ENCODE measurements at regions of chr1 and their contacts with region 1.

Region 1: GRCh38 chr1:11099310-11100149 is at the start of gene EXOSC10:
- DNase-seq: peak; percentile 95
- ATAC-seq: peak; percentile 97
- H3K4me3 Mint-ChIP-seq: peak within 1 kb of the TSS; percentile 91
- H3K27ac Mint-ChIP-seq: peak within 1 kb of the TSS; percentile 95
- H3K4me1 Mint-ChIP-seq: peaks cover 11% of the 10 kb centered on the region
- H3K27me3 Mint-ChIP-seq: no peaks in the 10 kb centered on the region
- CTCF ChIP-seq: no peak
- total RNA-seq, gene EXOSC10: 66.6 to 69.8 TPM

Region 2: DNA sequence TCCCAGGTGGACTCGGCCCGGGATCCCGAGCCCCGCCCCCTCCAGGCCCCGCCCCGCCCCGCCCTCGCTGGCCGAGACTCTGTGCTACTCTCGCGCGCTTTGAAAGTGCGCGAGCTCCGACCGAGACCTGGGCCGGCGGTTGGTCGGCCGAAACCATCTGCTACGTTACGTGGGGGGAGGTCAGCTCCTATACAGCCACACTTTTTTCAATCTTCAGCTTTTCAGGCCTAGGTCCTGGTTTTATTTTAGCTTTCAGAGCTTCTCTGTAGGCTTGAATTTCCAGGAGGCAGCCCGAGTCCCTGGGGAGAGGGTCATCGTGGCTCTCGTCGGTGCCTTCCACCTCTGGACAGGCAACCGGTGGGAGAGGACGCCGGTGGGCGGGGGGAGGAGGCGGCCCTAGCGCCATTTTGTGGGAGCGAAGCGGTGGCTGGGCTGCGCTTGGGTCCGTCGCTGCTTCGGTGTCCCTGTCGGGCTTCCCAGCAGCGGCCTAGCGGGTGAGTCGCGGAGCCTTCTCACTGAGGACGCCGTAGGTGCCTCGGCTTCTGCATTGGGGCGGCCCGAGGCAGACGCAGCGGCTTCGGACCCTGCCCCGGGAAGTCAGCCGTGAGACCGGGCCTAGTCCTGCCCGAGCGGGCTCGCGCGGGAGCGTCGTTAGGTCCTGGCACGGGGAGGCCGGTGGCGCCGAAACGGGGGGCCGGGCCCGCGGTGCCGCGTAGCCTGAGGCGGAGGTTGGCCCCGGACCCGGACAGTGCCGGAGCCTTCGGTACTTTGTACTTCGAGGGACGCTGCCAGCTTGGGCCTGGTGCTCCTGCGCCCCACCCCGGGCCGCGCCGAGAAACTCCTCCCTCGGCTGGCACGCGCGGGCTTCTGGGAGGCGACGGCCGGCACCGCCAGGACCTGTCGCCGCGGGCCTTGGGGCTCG is 87.0 kb before region 1 on chr1 and contains the start of gene TARDBP:
- CTCF ChIA-PET with region 1: no interaction called
- POLR2A ChIA-PET with region 1: interaction called, 12 read pairs
- intact Hi-C with region 1: no loop called
- DNase-seq: peak; percentile 92
- ATAC-seq: peak; percentile 92
- H3K4me3 Mint-ChIP-seq: peak within 1 kb of the TSS; percentile 96
- H3K27ac Mint-ChIP-seq: peak within 1 kb of the TSS; percentile 99
- H3K4me1 Mint-ChIP-seq: peaks cover 27% of the 10 kb centered on the region
- H3K27me3 Mint-ChIP-seq: no peaks in the 10 kb centered on the region
- CTCF ChIP-seq: no peak
- total RNA-seq, gene TARDBP: 152 to 163 TPM

Region 3: DNA sequence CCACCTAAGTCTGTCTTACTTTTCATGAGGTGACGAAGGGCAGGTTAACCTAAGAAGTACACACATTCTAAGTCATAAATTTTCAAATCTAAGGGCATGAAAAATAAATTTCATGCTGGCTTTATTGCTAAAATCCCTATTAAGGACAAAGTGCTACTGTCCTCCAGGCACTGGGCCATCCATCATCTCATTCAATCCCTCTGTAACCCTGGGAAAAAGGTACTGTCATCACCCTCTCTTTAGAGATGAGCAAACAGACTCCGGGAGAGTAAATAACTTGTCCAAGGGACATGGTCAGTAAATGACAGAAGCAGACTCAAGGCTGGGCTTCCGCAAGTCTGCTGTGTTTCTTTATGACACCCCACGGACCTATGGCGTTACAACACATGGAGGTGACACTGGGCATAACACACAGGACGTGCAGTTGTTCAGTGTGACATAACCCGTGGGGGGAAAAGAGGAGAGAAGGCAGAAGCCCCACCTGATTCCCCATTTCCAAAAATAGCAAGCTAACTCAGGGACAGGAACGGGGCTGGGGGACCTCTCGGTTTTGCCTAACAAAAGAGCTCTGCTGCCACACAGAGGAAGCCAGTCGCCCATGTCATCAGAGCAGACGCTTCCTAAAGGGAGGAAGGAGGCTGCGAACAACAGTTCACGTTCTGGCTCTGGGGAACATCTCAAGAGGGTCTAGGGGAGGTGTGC is 27.2 kb before region 1 on chr1:
- CTCF ChIA-PET with region 1: no interaction called
- POLR2A ChIA-PET with region 1: interaction called, 13 read pairs
- intact Hi-C with region 1: no loop called
- DNase-seq: no peak
- ATAC-seq: no peak
- H3K4me3 Mint-ChIP-seq: no peak overlapping the region
- H3K27ac Mint-ChIP-seq: peak overlapping the region; percentile 57
- H3K4me1 Mint-ChIP-seq: peaks cover 19% of the 10 kb centered on the region
- H3K27me3 Mint-ChIP-seq: no peaks in the 10 kb centered on the region
- CTCF ChIP-seq: no peak